ENCODE measurements at regions of chr17 and their contacts with region 1.

Region 1: GRCh38 chr17:49361902-49362722 is at the start of gene ZNF652:
- DNase-seq: peak; percentile 86 to 92 (median 90)
- H3K4me3 ChIP-seq: peak within 1 kb of the TSS; percentile 68 to 88 (median 79)
- H3K27ac ChIP-seq: peak within 1 kb of the TSS; percentile 15 to 74
- H3K4me1 ChIP-seq: peaks cover 26 to 47% (median 37%) of the 10 kb centered on the region in 4 experiments
- H3K27me3 ChIP-seq: no peaks in the 10 kb centered on the region

Region 2: DNA sequence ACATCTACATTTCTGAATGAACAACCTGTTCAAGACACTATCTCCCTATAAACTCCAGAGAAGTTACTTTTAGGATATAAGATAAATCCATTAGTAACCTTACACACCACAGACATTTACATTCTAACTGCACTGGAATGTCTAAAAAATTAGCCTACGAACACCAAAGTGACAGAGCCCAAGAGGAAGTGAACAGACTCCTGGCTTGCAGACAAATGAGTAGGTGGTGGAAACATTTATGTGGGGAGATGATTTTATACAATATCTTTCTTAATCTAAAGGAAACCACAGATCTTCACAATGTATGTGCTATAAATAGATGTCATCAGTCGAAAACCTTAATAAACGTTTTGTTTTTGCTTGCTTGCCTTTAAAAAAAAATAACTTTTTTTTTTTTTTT is 18.8 kb before region 1 on chr17:
- CTCF ChIA-PET with region 1: interaction called, 12 read pairs
- POLR2A ChIA-PET with region 1: interaction called, 5 read pairs
- DNase-seq: peak in 2 of 3 donors; percentile 63 to 79
- H3K4me3 ChIP-seq: peak overlapping the region in 3 of 7 experiments; percentile 23 to 58 (median 51)
- H3K27ac ChIP-seq: no peak overlapping the region
- H3K4me1 ChIP-seq: peaks cover 8 to 26% (median 20%) of the 10 kb centered on the region in 4 experiments
- H3K27me3 ChIP-seq: no peaks in the 10 kb centered on the region

Region 3: GRCh38 chr17:49390548-49391324 is 28.6 kb after region 1 on chr17:
- CTCF ChIA-PET with region 1: interaction called, 18 read pairs
- POLR2A ChIA-PET with region 1: interaction called, 3 read pairs
- DNase-seq: peak in 2 of 3 donors; percentile 54 to 63
- H3K4me3 ChIP-seq: peak overlapping the region in 3 of 7 experiments; percentile 1 to 50 (median 39)
- H3K27ac ChIP-seq: peak overlapping the region in 1 of 2 experiments; percentile 39
- H3K4me1 ChIP-seq: peaks cover 36 to 66% (median 55%) of the 10 kb centered on the region in 4 experiments
- H3K27me3 ChIP-seq: no peaks in the 10 kb centered on the region

Region 4: GRCh38 chr17:49401971-49402611 is 40.0 kb after region 1 on chr17:
- CTCF ChIA-PET with region 1: interaction called, 12 read pairs
- POLR2A ChIA-PET with region 1: no interaction called
- DNase-seq: no peak
- H3K4me3 ChIP-seq: no peak overlapping the region
- H3K27ac ChIP-seq: no peak overlapping the region
- H3K4me1 ChIP-seq: peaks cover 8 to 51% (median 48%) of the 10 kb centered on the region in 4 experiments
- H3K27me3 ChIP-seq: no peaks in the 10 kb centered on the region

Measured in common myeloid progenitor, CD34-positive (primary cell).